Natural killer cell (primary cell): ENCODE measurements at regions of chr11 and their contacts with region 1.

Region 1: DNA sequence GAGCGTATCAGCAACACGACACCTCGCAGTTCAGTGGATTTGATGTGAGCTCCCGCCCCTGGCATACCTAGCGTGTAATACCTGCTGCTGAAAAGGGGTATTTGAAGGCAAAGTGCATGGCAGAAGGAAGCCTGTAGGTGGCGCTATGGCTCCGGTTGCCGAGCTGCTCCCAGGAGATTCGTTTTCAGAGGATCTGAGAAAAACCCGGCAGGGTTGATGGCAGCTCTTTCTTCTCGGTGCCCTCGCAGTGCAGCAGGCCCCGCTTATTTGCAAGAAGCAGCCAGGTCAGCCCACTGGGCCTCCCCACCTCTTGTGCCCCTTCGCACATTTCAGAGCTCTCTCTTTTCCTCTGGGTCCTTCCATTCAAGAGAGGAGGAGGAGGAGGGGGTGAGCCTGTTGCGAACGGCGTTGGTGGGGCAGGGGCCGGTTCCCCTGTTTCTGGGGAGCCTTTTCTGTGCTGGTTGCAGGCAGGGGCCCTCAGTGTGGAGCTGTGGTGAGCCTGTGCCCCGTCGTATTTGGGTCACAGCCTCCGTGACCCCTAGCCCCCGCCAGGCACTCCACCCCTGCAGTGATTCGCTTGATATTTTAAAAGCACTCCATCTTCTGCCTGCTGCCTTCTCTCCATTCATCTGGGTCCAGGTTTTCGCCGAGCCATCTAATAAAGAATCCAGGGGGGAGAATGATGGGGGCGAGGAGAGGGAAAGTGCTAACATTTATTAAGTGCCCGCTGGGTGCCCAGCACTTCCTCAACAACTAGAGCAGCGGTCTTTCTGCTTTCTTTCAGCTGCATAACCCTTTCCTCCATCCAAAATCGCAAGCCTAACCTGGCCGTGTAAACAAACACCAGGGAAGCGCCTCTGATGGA is 85.3 kb upstream of the SYT13 start:
- DNase-seq: peak; percentile 47 to 83
- ATAC-seq: peak; percentile 46 to 70 (median 68)
- H3K4me3 ChIP-seq: no peak overlapping the region
- H3K4me3 Mint-ChIP-seq: no peak overlapping the region
- H3K27ac ChIP-seq: no peak overlapping the region
- H3K27ac Mint-ChIP-seq: no peak overlapping the region
- H3K4me1 ChIP-seq: peaks cover 22% of the 10 kb centered on the region
- H3K4me1 Mint-ChIP-seq: peaks cover 11 to 26% of the 10 kb centered on the region in 2 donors
- H3K27me3 ChIP-seq: peaks cover 5% of the 10 kb centered on the region
- H3K27me3 Mint-ChIP-seq: peaks cover 26 to 34% of the 10 kb centered on the region in 2 donors
- CTCF ChIP-seq: peak; percentile 74

Region 2: DNA sequence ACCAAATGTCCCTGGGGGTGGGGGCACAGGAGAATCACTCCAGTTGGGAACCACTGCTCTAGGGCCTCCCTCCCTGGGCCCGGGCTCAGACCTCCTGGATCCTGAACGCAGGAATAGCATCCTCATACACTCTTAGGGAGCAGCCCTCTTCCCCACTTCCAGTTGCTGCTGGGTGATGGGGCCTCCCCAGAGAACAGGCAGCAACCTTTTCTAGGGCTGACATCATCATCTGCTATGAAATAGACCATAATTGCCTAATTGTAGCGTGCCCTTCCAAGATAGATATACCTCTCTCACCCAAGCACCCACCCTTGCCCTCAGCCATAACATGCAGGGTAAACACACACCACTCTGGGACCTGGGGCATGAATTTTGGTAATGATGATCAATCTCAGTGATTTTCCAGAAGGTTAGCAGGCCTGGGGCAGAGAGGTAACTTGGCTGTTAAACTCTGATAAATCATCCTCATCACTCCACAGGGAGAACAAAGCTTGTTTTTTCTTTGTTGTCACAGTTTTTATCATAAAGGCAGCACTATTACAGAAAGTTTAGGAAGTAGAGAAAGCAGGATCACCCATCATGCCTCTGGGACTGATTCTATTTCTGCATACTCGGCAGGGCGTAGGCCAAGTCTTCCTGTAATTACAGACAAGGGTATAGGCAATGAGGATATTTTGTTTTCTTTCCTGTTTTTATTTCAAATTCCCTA is 313.4 kb before region 1 on chr11:
- intact Hi-C with region 1: no loop called
- DNase-seq: no peak
- ATAC-seq: no peak
- H3K4me3 ChIP-seq: no peak overlapping the region
- H3K4me3 Mint-ChIP-seq: no peak overlapping the region
- H3K27ac ChIP-seq: no peak overlapping the region
- H3K27ac Mint-ChIP-seq: no peak overlapping the region
- H3K4me1 ChIP-seq: no peaks in the 10 kb centered on the region
- H3K4me1 Mint-ChIP-seq: peaks cover 7 to 8% of the 10 kb centered on the region in 2 donors
- H3K27me3 ChIP-seq: no peaks in the 10 kb centered on the region
- H3K27me3 Mint-ChIP-seq: peaks cover 0 to 14% of the 10 kb centered on the region in 2 donors
- CTCF ChIP-seq: no peak

Region 3: GRCh38 chr11:45655347-45655756 is 283.9 kb after region 1 on chr11:
- intact Hi-C with region 1: loop called (anchors 10 kb)
- DNase-seq: peak; percentile 39 to 72
- ATAC-seq: peak; percentile 61 to 81 (median 64)
- H3K4me3 ChIP-seq: no peak overlapping the region
- H3K4me3 Mint-ChIP-seq: no peak overlapping the region
- H3K27ac ChIP-seq: no peak overlapping the region
- H3K27ac Mint-ChIP-seq: no peak overlapping the region
- H3K4me1 ChIP-seq: peaks cover 18% of the 10 kb centered on the region
- H3K4me1 Mint-ChIP-seq: peaks cover 5 to 10% of the 10 kb centered on the region in 2 donors
- H3K27me3 ChIP-seq: peaks cover 2% of the 10 kb centered on the region
- H3K27me3 Mint-ChIP-seq: peaks cover 22 to 26% of the 10 kb centered on the region in 2 donors
- CTCF ChIP-seq: peak; percentile 78